Body of pancreas (tissue), 4 donors: ENCODE measurements at regions of chr22 and their contacts with region 1.

Region 1: DNA sequence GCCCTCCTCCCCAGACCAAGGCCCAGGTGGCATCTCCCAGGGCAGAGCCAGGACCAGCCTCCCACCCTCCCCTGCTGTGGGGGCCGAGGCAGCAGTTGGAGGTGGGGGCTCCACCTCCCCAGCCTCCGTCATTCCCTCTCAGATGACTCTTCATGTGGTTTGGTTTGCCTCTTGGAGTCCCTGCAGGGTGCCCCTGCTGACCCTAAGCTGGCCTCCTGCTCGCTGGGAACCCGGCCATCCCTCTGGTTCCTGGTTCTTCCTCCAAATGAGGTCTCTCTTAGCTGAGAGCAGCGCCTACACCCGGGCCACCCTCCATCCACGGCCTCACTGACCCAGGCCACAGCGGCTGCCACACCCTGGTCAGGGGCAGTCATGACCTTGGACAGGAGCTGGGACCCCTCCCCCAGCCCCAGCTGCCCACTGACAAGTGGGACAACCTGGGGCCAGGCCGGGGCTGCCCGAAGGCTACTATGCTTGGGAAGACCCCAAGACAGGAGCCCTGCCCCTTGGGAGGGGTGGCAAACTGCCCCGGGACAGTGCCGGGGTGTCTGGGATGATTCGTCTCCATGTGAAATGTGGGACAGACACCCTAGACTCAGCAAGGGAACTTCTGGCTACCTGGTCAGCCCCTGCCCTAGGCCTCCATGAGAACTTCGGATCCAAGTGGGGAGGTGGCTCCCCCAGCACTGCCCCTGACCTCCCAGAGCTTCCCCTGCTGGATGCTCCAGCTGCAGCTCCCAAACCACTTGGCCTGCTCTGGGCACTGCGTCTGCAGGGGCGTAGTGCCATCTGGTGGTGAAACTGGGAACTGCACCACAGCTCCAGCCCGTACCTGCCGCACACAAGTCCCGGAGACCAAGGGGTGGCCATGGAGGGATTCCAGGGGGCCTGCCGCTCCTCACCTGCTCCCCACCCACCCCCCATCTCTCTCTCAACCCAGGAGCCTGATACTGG is 194.5 kb downstream of the IGLL1 start:
- DNase-seq: peak; percentile 81 to 88 (median 86)
- ATAC-seq: peak; percentile 82
- H3K4me3 ChIP-seq: no peak overlapping the region
- H3K27ac ChIP-seq: no peak overlapping the region
- H3K4me1 ChIP-seq: peaks cover 5% of the 10 kb centered on the region
- H3K27me3 ChIP-seq: no peaks in the 10 kb centered on the region
- CTCF ChIP-seq: peak; percentile 95 to 99 (median 95)
- POLR2A ChIP-seq: no peak

Region 2: DNA sequence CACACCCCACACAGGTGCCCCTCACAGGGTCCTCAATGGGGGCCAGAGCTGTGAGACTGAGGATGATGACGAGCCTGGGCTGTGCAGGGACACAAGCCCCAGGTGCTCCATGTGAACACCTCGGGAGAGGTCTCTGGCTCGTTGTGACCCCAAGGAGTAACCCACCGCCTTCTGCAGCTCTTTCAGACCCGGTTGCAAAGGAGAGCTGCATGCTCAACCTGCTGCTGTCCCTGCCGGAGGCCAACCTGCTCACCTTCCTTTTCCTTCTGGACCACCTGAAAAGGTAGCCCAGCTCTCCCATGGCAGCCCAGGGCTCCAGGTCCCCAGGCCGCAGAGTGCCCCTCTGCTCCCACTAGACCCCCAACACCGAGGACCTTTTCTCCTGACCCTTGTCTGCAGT is 71.8 kb before region 1 on chr22:
- intact Hi-C with region 1: loop called (anchors 5 kb)
- DNase-seq: no peak
- ATAC-seq: no peak
- H3K4me3 ChIP-seq: no peak overlapping the region
- H3K27ac ChIP-seq: no peak overlapping the region
- H3K4me1 ChIP-seq: no peaks in the 10 kb centered on the region
- H3K27me3 ChIP-seq: no peaks in the 10 kb centered on the region
- CTCF ChIP-seq: no peak
- POLR2A ChIP-seq: no peak

Region 3: GRCh38 chr22:23478201-23478600 is 92.6 kb after region 1 on chr22:
- intact Hi-C with region 1: no loop called
- DNase-seq: no peak
- ATAC-seq: no peak
- H3K4me3 ChIP-seq: no peak overlapping the region
- H3K27ac ChIP-seq: no peak overlapping the region
- H3K4me1 ChIP-seq: no peaks in the 10 kb centered on the region
- H3K27me3 ChIP-seq: no peaks in the 10 kb centered on the region
- CTCF ChIP-seq: no peak
- POLR2A ChIP-seq: no peak